ENCODE measurements at regions of chr4 and their contacts with region 1.

Region 1: DNA sequence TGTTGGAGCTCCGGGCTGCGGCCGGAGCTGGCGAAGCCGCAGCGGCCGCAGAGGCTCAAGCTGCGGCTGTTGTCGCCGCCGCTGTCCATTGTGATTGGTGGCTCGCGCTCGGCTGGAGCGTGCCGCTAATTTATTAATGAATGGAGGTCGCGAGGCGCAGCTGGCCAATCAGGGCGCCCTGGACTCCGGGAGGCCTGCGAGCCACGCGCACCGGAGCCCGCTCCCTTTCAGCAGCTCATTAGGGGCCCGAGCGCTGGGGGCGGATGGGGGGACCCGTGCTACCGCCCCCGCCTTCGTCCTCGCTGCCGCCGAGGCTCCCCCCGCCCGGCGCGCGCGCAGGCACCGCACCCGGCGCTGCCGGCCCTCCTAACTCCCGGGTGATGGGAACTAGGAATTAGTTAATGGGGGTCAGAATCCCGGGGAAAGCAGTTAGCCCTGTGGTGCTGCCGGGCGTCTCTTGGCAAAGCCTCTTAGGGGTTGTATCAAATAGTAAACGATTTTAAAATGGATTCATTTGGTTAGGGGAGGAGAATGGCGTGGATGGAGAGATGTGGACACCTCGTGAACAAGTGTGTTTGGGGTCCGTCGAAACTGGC is 589 bp upstream of the NEUROG2 start:
- DNase-seq: peak; percentile 42
- H3K4me3 ChIP-seq: peak overlapping the region; percentile 67
- H3K27ac ChIP-seq: no peak overlapping the region
- H3K4me1 ChIP-seq: peaks cover 34% of the 10 kb centered on the region
- CTCF ChIP-seq: no peak

Region 2: DNA sequence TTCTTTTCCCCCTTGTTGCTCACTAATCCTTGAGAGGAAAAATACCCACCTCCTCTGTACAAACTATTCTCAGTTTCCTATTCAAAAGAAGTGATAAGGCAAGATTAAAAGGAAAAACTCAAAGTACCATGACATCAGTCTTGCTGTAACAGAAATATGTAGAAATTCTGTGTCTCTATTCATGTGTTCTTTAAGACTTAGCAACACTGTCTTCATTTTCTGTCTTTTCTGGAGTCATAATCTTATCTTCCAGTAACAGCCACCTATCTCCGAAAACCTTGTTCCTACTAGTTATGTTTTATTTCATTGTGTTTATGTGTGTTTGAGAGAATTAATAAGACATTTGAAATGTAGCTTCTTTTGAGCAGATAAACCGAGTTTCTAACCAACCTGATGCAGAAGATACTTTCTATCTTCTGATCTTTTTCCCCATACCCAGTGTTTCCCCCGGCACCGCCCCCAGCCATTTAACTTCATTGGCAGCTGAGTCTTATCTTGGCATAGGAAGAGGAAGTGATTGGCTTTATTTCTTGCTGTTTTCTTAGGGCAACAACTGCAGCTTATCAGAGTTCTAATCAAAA is 363.3 kb before region 1 on chr4:
- CTCF ChIA-PET with region 1: interaction called, 10 read pairs
- POLR2A ChIA-PET with region 1: interaction called, 3 read pairs
- intact Hi-C with region 1: no loop called
- DNase-seq: no peak
- H3K4me3 ChIP-seq: peak overlapping the region; percentile 21
- H3K27ac ChIP-seq: no peak overlapping the region
- H3K4me1 ChIP-seq: peaks cover 44% of the 10 kb centered on the region
- CTCF ChIP-seq: no peak